Psoas muscle (tissue), 8 donors: ENCODE measurements at regions of chr10 and their contacts with region 1.

Region 1: DNA sequence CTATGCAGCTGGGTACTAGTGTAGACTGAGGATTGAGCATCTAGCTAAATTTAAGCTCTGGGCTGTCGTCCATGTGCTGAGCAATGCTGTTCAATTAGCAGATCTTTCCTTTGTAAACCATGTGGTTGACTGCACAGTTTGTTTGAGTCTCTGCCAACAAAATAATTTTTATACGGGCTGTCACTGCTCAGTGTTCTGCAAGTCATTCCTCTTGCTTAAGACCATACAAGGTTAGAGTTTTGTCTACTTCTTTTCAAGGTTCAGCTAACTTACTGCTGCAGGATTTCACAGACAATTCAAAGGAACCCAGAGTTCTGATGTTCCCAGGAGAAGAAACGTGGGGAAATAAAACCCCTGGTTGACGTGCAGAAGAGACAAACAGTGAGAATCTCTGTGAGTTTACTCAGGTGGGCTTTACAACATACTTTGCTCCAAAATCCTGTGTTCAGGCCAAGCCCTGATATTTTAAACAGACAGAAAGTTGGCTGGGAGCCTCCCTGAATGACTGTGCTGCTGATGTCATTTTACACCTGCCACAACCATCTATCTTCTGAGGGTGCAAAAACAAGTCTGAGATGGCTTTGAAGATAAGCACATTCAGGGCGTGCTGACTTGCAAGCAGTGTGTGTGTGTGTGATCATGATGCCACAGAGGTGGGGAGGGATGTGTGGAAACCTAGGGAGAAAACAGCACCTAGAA is 177.1 kb upstream of the SVIL start:
- DNase-seq: peak; percentile 33 to 65
- ATAC-seq: peak; percentile 92
- H3K4me3 ChIP-seq: peak overlapping the region; percentile 31
- H3K27ac ChIP-seq: peak overlapping the region; percentile 84
- H3K4me1 ChIP-seq: peaks cover 48% of the 10 kb centered on the region
- H3K27me3 ChIP-seq: no peaks in the 10 kb centered on the region
- CTCF ChIP-seq: no peak

Region 2: GRCh38 chr10:29204070-29204800 is 607.7 kb before region 1 on chr10:
- intact Hi-C with region 1: no loop called
- DNase-seq: no peak
- ATAC-seq: no peak
- H3K4me3 ChIP-seq: no peak overlapping the region
- H3K27ac ChIP-seq: no peak overlapping the region
- H3K4me1 ChIP-seq: no peaks in the 10 kb centered on the region
- H3K27me3 ChIP-seq: no peaks in the 10 kb centered on the region
- CTCF ChIP-seq: no peak

Region 3: GRCh38 chr10:29646238-29646902 is 165.5 kb before region 1 on chr10:
- intact Hi-C with region 1: loop called in 1 of 2 experiments (anchors 10 kb)
- DNase-seq: peak in 1 of 2 donors; percentile 51
- ATAC-seq: peak; percentile 45 to 54 (median 49)
- H3K4me3 ChIP-seq: peak overlapping the region; percentile 25
- H3K27ac ChIP-seq: peak overlapping the region; percentile 94
- H3K4me1 ChIP-seq: peaks cover 67% of the 10 kb centered on the region
- H3K27me3 ChIP-seq: no peaks in the 10 kb centered on the region
- CTCF ChIP-seq: no peak

Region 4: GRCh38 chr10:29849886-29850285 is 38.0 kb after region 1 on chr10:
- intact Hi-C with region 1: loop called in 1 of 2 experiments (anchors 5 kb)
- DNase-seq: no peak
- ATAC-seq: no peak
- H3K4me3 ChIP-seq: no peak overlapping the region
- H3K27ac ChIP-seq: peak overlapping the region; percentile 6
- H3K4me1 ChIP-seq: peaks cover 5% of the 10 kb centered on the region
- H3K27me3 ChIP-seq: no peaks in the 10 kb centered on the region
- CTCF ChIP-seq: no peak

Region 5: GRCh38 chr10:30270247-30270646 is 458.3 kb after region 1 on chr10:
- intact Hi-C with region 1: no loop called
- DNase-seq: no peak
- ATAC-seq: no peak
- H3K4me3 ChIP-seq: no peak overlapping the region
- H3K27ac ChIP-seq: no peak overlapping the region
- H3K4me1 ChIP-seq: no peaks in the 10 kb centered on the region
- H3K27me3 ChIP-seq: no peaks in the 10 kb centered on the region
- CTCF ChIP-seq: no peak